ENCODE measurements at regions of chrX and their contacts with region 1.

Region 1: GRCh38 chrX:70096052-70096451 is 33.8 kb downstream of the OTUD6A start:
- DNase-seq: no peak
- ATAC-seq: no peak
- H3K4me3 ChIP-seq: no peak overlapping the region
- H3K27ac ChIP-seq: no peak overlapping the region
- H3K4me1 ChIP-seq: no peaks in the 10 kb centered on the region
- H3K27me3 ChIP-seq: no peaks in the 10 kb centered on the region
- CTCF ChIP-seq: no peak
- POLR2A ChIP-seq: no peak

Region 2: DNA sequence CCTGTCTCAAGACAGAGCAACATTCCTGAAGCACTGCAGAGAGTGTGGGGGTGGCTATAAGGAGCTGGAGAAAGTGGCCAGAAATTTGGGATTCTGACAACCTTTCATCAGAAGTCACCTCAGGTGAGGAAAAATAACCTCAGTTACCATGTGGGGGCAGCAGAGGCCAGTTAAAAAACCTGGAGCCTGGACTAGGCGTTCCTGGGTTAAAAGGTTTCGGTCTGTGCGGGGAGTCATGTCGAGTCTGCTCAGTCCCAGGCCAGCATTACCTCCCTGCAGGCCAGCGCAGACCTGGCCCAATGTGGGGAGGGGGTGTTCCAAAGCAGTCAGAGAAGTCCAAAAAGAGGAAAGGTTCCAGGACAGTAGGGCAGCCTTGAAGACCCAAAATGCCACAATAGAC is 602.9 kb before region 1 on chrX:
- in situ Hi-C with region 1: loop called in 1 of 4 experiments (anchors 10 kb)
- intact Hi-C with region 1: no loop called
- DNase-seq: no peak
- ATAC-seq: no peak
- H3K4me3 ChIP-seq: no peak overlapping the region
- H3K27ac ChIP-seq: no peak overlapping the region
- H3K4me1 ChIP-seq: no peaks in the 10 kb centered on the region
- H3K27me3 ChIP-seq: no peaks in the 10 kb centered on the region
- CTCF ChIP-seq: peak in 3 of 5 experiments; percentile 25 to 41 (median 41)
- POLR2A ChIP-seq: no peak

Region 3: GRCh38 chrX:69538321-69538876 is 557.7 kb before region 1 on chrX:
- in situ Hi-C with region 1: loop called in 1 of 4 experiments (anchors 25 kb)
- intact Hi-C with region 1: loop called (anchors 2 kb)
- DNase-seq: peak; percentile 23 to 43
- ATAC-seq: peak; percentile 78 to 80
- H3K4me3 ChIP-seq: peak overlapping the region; percentile 50 to 60 (median 53)
- H3K27ac ChIP-seq: no peak overlapping the region
- H3K4me1 ChIP-seq: no peaks in the 10 kb centered on the region
- H3K27me3 ChIP-seq: no peaks in the 10 kb centered on the region
- CTCF ChIP-seq: peak; percentile 62 to 80 (median 74)
- POLR2A ChIP-seq: no peak

Region 4: GRCh38 chrX:69759921-69760625 is 336.0 kb before region 1 on chrX:
- in situ Hi-C with region 1: no loop called
- intact Hi-C with region 1: no loop called
- DNase-seq: no peak
- ATAC-seq: no peak
- H3K4me3 ChIP-seq: no peak overlapping the region
- H3K27ac ChIP-seq: no peak overlapping the region
- H3K4me1 ChIP-seq: no peaks in the 10 kb centered on the region
- H3K27me3 ChIP-seq: no peaks in the 10 kb centered on the region
- CTCF ChIP-seq: no peak
- POLR2A ChIP-seq: no peak

Region 5: DNA sequence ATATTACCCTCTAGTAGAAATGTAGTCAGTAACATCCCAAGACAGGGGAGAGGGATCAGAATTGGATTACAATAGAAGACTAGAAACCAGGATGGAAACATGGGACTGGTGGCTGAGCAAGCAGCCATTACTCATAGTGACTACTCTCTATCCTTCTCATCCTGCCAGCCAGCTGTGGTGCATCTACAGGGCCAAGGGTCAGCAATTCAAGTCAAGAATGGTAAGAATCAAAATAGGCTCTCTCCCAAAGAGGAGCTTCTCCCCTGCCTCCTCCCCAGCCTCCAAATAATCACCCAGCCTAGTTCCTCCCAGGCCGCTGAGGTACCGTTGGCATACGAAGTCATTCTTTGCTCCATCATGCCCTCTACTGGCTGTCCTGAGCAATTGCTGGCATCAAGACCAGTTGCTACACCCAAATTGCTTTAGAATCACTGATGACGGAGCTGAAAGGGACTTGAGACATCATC is 65.7 kb before region 1 on chrX:
- in situ Hi-C with region 1: loop called in 1 of 4 experiments (anchors 10 kb)
- intact Hi-C with region 1: no loop called
- DNase-seq: peak in 1 of 2 donors; percentile 14
- ATAC-seq: peak; percentile 49 to 56
- H3K4me3 ChIP-seq: no peak overlapping the region
- H3K27ac ChIP-seq: no peak overlapping the region
- H3K4me1 ChIP-seq: no peaks in the 10 kb centered on the region
- H3K27me3 ChIP-seq: no peaks in the 10 kb centered on the region
- CTCF ChIP-seq: peak in 4 of 5 experiments; percentile 45 to 65 (median 61)
- POLR2A ChIP-seq: no peak